ENCODE measurements at regions of chr5 and their contacts with region 1.

Region 1: GRCh38 chr5:123423278-123424149 is at the start of gene CEP120:
- DNase-seq: peak; percentile 97
- CTCF ChIP-seq: peak; percentile 87

Region 2: DNA sequence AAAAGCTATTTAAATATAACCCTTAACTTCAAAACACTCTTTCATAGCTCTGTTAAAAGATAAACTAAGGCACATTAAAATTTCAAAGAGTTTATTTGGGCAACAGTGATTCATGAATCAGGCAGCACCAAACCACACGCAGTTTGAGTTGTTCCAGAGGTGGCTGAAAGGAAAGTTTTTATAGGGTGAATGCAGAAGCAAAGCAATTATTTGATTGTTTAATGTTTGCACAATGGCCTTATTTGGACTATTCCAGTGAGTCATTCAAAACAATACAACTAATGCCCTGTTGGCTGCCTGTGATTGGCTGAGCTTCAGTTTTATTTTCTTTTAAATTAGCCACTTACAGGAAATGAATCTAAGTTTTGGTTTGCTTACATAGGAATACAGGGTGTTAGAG is 125.6 kb before region 1 on chr5:
- in situ Hi-C with region 1: no loop called
- DNase-seq: no peak
- CTCF ChIP-seq: no peak

Region 3: GRCh38 chr5:123582550-123583285 is 159.2 kb after region 1 on chr5:
- in situ Hi-C with region 1: loop called (anchors 25 kb)
- DNase-seq: no peak
- CTCF ChIP-seq: no peak

Measured in GM13977 (cell line).